ENCODE measurements at regions of chr9 and their contacts with region 1.

Region 1: DNA sequence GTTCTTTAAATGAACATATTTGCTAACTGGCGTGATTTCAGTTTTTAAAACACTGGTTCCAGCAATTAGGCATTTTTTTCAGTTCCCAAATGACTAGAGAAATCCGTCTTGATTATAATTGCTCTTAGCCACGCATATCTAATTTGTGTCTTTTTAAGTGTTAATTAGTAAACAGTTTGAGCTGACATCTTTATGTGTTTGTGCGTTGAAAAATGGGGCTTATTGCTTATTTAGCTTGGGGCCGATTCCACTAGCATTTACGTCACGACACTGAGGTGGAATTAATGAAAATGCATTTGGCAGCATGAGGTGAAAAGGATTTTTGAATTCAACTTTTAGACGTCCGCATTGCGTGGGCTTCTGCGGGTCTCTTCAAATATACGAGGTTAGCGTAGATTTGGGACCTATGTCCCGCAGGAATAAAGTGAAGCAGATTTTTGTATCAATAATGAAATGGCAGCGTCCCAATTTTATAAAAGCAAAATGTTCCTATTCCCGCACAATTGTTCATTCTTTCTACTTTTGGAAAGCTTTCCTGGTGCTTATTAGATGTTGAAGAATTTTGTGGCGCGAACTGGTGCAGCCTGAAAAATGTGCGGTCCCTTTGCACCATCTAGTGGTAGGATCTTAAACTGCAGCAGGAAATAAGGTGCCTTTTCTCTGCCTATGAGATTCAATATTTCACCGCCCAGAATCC is 122.7 kb upstream of the LMX1B start:
- DNase-seq: peak; percentile 69
- ATAC-seq: peak; percentile 39
- H3K4me3 Mint-ChIP-seq: no peak overlapping the region
- H3K27ac Mint-ChIP-seq: no peak overlapping the region
- H3K4me1 Mint-ChIP-seq: peaks cover 10% of the 10 kb centered on the region
- H3K27me3 Mint-ChIP-seq: no peaks in the 10 kb centered on the region

Region 2: GRCh38 chr9:125558453-125559092 is 932.4 kb before region 1 on chr9:
- CTCF ChIA-PET with region 1: interaction called, 3 read pairs
- POLR2A ChIA-PET with region 1: no interaction called
- intact Hi-C with region 1: loop called (anchors 1 to 2 kb)
- DNase-seq: peak; percentile 71
- ATAC-seq: peak; percentile 72
- H3K4me3 Mint-ChIP-seq: no peak overlapping the region
- H3K27ac Mint-ChIP-seq: no peak overlapping the region
- H3K4me1 Mint-ChIP-seq: peaks cover 11% of the 10 kb centered on the region
- H3K27me3 Mint-ChIP-seq: no peaks in the 10 kb centered on the region

Region 3: DNA sequence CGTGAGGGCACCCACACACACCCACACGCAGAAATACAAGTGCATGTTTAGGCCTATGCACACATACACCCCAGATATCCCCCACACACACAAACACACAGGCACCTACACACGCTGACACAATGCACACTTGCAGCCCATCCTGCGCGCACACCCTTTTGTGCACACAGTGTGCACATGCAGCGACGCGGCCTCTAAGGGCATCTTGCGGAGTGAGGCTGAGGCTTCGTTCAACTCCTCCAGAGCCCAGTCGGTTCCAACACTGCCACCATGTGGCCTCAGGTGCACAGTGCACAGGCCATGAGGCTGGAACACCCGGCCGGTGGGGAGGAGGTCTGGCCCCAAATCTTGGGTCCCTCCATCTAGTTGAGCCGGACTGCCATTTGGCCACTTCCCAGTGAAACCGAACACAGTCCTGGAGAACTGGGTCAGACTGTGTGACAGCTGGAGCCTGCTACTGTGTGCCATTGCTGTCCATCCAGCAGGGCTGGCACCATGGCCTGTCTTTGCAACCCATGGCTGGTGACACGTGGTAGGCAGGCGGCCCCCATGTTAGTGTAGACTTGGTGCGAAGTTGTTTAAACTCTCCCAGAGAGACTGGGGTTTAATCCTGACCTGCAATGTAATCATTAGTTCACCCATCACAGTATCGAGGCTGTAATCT is 262.1 kb before region 1 on chr9:
- CTCF ChIA-PET with region 1: interaction called, 4 read pairs
- POLR2A ChIA-PET with region 1: no interaction called
- intact Hi-C with region 1: loop called in 1 of 2 experiments (anchors 2 kb)
- DNase-seq: peak; percentile 84
- ATAC-seq: peak; percentile 99
- H3K4me3 Mint-ChIP-seq: no peak overlapping the region
- H3K27ac Mint-ChIP-seq: no peak overlapping the region
- H3K4me1 Mint-ChIP-seq: no peaks in the 10 kb centered on the region
- H3K27me3 Mint-ChIP-seq: peaks cover 29% of the 10 kb centered on the region

Region 4: DNA sequence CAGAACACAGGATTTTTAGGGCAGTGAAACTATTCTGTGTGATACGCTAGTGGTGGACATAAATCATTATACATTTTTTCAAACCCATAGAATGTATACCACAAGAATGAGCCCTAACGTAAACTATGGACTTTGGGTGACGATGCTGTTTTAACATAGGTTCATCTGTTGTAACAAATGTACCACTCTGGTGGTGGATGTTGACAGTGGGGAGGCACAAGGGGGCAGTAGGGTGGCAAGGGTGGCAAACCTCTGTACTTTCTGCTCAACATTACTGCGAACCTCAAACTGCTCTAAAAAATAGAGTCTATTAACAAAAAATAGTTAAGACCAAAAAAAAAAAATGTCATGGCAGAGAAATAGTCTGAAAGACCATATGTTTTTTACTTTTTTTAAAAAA is 173.5 kb before region 1 on chr9:
- CTCF ChIA-PET with region 1: interaction called, 11 read pairs
- POLR2A ChIA-PET with region 1: no interaction called
- intact Hi-C with region 1: loop called (anchors 1 to 5 kb)
- DNase-seq: peak; percentile 60
- ATAC-seq: peak; percentile 53
- H3K4me3 Mint-ChIP-seq: no peak overlapping the region
- H3K27ac Mint-ChIP-seq: no peak overlapping the region
- H3K4me1 Mint-ChIP-seq: no peaks in the 10 kb centered on the region
- H3K27me3 Mint-ChIP-seq: no peaks in the 10 kb centered on the region

Region 5: DNA sequence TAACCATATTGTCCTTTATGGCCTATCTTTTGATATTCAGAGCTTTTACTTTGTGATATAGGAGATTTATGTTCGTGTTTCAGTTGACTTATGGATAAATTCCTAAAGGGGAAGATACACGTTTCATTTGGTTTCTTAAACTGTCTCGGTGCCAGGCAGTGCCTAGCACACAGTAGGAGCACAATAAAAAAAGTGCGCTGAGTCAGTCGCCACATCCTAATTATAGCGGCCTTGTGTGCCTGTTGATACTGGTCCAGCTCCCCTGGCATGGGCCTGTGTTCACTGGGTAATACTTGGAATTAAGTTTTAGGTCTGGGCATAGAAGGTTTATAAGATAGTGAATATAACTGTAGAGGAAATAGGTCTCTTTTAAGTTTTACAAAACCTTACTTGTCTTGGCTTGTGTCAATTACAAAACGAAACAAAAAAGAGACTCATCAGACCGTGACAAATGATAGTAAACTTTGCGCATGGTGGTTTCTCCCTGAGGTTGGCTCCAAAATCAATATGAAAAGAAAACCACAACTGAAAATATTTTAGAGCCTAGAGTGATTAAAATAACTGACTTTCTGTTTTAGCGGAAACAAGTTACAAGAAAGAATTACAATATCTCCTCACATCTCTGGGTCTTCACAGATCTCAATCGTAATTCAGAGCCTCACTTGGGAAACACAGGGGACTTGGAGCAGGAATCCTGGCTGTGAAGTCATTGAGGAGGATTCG is 79.6 kb before region 1 on chr9:
- CTCF ChIA-PET with region 1: interaction called, 4 read pairs
- POLR2A ChIA-PET with region 1: no interaction called
- intact Hi-C with region 1: loop called in 1 of 2 experiments (anchors 5 kb)
- DNase-seq: peak; percentile 62
- ATAC-seq: peak; percentile 89
- H3K4me3 Mint-ChIP-seq: peak overlapping the region; percentile 54
- H3K27ac Mint-ChIP-seq: peak overlapping the region; percentile 72
- H3K4me1 Mint-ChIP-seq: peaks cover 35% of the 10 kb centered on the region
- H3K27me3 Mint-ChIP-seq: no peaks in the 10 kb centered on the region

Region 6: DNA sequence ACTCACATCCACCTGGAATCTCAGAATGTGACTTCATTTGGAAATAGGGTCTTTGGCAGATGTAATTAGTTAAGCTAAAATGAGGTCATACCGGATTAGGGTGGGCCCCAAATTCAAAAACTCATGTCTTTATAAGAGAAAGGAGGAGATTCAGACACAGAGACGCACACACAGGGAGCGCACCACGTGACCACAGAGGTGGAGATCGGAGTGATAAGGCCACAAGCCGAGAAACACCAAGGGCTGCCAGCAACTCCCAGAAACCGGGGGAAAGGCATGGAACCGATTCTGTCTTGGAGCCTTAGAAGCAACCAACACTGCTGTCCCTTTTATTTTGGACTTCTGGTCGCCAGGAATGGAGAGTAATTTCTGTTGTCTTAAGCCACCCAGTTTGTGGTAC is 90.9 kb after region 1 on chr9:
- CTCF ChIA-PET with region 1: no interaction called
- POLR2A ChIA-PET with region 1: no interaction called
- intact Hi-C with region 1: no loop called
- DNase-seq: no peak
- ATAC-seq: no peak
- H3K4me3 Mint-ChIP-seq: no peak overlapping the region
- H3K27ac Mint-ChIP-seq: no peak overlapping the region
- H3K4me1 Mint-ChIP-seq: no peaks in the 10 kb centered on the region
- H3K27me3 Mint-ChIP-seq: peaks cover 33% of the 10 kb centered on the region

Region 7: GRCh38 chr9:126738553-126738952 is 247.5 kb after region 1 on chr9:
- CTCF ChIA-PET with region 1: no interaction called
- POLR2A ChIA-PET with region 1: no interaction called
- intact Hi-C with region 1: no loop called
- DNase-seq: no peak
- ATAC-seq: no peak
- H3K4me3 Mint-ChIP-seq: no peak overlapping the region
- H3K27ac Mint-ChIP-seq: no peak overlapping the region
- H3K4me1 Mint-ChIP-seq: no peaks in the 10 kb centered on the region
- H3K27me3 Mint-ChIP-seq: no peaks in the 10 kb centered on the region